B cell (primary cell): ENCODE measurements at regions of chr19 and their contacts with region 1.

Region 1: DNA sequence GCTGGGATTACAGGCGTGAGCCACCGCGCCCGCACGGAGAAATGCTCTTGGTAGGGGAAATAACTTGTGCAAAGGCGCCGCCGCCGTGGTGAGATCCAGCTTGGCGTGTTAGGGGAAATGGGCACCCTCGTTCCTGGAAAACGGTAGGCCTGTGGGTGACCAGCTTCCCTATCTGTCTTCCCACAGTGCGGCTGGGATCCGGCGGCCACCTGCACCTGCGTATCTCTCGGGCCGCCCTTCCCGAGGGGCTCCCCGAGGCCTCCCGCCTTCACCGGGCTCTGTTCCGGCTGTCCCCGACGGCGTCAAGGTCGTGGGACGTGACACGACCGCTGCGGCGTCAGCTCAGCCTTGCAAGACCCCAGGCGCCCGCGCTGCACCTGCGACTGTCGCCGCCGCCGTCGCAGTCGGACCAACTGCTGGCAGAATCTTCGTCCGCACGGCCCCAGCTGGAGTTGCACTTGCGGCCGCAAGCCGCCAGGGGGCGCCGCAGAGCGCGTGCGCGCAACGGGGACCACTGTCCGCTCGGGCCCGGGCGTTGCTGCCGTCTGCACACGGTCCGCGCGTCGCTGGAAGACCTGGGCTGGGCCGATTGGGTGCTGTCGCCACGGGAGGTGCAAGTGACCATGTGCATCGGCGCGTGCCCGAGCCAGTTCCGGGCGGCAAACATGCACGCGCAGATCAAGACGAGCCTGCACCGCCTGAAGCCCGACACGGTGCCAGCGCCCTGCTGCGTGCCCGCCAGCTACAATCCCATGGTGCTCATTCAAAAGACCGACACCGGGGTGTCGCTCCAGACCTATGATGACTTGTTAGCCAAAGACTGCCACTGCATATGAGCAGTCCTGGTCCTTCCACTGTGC is 2.4 kb downstream of the GDF15 start:
- DNase-seq: peak; percentile 93
- ATAC-seq: peak; percentile 85
- H3K4me3 ChIP-seq: peak overlapping the region in 4 of 5 experiments; percentile 26 to 51 (median 40)
- H3K4me3 Mint-ChIP-seq: peak overlapping the region; percentile 82
- H3K27ac ChIP-seq: no peak overlapping the region
- H3K27ac Mint-ChIP-seq: peak overlapping the region; percentile 70
- H3K4me1 ChIP-seq: peaks cover 34 to 36% of the 10 kb centered on the region in 2 donors
- H3K4me1 Mint-ChIP-seq: peaks cover 34% of the 10 kb centered on the region
- H3K27me3 ChIP-seq: peaks cover 0 to 38% (median 17%) of the 10 kb centered on the region in 4 experiments
- H3K27me3 Mint-ChIP-seq: peaks cover 5% of the 10 kb centered on the region
- CTCF ChIP-seq: peak; percentile 99

Region 2: DNA sequence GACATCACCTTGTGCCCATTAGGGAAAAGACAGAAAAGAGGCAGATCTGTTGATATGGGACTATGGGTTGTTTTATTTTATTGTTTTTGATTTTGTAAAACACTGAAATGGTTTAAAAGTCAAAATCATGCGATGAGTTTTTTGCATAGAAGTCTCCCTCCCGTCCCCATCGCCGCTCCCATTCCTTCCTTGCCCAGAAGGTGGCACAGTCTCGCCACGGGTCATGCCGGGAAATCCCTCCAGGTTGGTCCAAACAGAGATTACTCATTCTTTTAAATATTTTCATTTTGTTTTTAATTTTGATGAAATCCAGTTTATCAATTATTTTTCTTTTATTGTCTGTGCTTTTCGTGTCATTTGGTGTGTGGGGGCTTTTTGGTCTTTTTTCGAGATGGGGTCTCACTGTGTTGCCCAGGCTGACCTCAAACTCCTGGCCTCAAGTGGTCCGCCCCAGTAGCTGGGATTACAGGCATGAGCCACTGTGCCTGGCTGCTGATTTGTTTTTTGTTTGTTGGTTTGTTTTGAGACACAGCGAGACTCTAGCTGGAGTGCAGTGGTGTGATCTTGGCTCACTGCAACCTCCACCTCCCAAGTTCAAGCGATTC is 38.7 kb before region 1 on chr19:
- CTCF ChIA-PET with region 1: interaction called, 18 read pairs
- POLR2A ChIA-PET with region 1: no interaction called
- intact Hi-C with region 1: no loop called
- DNase-seq: peak; percentile 40
- ATAC-seq: peak; percentile 61
- H3K4me3 ChIP-seq: no peak overlapping the region
- H3K4me3 Mint-ChIP-seq: no peak overlapping the region
- H3K27ac ChIP-seq: no peak overlapping the region
- H3K27ac Mint-ChIP-seq: no peak overlapping the region
- H3K4me1 ChIP-seq: no peaks in the 10 kb centered on the region
- H3K4me1 Mint-ChIP-seq: no peaks in the 10 kb centered on the region
- H3K27me3 ChIP-seq: no peaks in the 10 kb centered on the region
- H3K27me3 Mint-ChIP-seq: no peaks in the 10 kb centered on the region
- CTCF ChIP-seq: peak; percentile 51

Region 3: DNA sequence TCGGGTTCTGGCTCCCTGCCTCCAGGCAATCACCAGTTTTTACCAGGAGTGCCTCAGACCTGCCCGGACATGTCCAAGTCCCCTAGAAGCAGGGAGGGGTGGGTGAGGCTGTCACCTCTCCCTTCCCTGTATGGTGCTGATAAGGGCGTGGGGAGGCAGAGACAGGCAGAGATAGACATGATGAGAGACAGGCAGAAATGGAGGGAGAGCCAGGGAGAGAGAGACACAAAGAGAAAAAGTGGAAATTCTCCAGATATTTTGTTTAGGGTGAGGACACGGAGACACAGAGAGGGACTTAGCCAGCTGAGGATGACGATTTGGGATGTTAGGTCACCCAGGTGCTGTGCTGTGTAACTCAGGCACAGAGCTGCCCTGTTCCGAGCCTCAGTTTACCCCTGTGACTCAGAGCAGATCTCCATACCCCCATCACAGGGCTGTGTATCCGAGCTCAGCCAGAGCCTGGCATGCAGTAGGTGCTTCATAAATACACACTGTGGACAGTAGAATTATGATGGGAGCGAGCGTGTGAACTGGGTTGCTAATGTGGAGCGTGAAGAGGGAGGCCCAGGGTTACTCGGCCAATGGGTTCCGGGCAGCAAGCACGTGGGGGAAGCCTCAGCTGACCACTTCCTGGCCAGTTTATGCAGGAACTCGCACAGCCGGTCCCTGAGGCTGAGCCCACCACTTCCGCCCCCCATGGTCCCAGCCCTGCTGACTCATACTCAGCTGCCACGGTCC is 14.3 kb before region 1 on chr19:
- CTCF ChIA-PET with region 1: interaction called, 11 read pairs
- POLR2A ChIA-PET with region 1: interaction called, 3 read pairs
- intact Hi-C with region 1: no loop called
- DNase-seq: peak; percentile 42
- ATAC-seq: peak; percentile 80
- H3K4me3 ChIP-seq: no peak overlapping the region
- H3K4me3 Mint-ChIP-seq: peak overlapping the region; percentile 51
- H3K27ac ChIP-seq: no peak overlapping the region
- H3K27ac Mint-ChIP-seq: peak overlapping the region; percentile 23
- H3K4me1 ChIP-seq: peaks cover 13 to 17% of the 10 kb centered on the region in 2 donors
- H3K4me1 Mint-ChIP-seq: peaks cover 14% of the 10 kb centered on the region
- H3K27me3 ChIP-seq: peaks cover 0 to 5% (median 0%) of the 10 kb centered on the region in 4 experiments
- H3K27me3 Mint-ChIP-seq: peaks cover 10% of the 10 kb centered on the region
- CTCF ChIP-seq: no peak

Region 4: DNA sequence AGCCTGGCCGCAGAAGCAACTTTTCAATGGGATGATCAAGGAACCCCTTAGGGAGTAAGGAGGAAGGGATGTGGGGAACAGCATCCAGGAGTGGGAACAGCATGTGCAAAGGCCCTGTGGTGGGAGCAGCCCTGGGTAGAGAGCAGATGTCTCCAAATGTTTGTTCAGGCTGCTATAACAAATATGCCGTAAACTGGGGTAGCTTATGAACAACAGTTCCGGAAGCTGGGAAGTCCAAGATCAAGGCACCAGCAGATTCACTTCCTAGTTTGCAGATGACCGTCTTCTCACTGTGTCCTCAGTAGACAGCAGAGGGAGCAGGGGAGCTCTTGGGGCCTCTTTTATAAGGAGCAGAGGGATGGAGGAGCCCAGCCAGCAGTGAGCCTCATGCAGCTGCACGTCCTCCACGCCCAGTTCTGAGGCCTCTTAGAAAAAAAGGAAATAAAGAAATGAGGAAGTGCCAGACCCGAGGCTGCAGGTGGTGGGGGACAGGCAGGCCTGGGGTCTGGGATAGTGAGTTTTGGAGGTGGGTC is 13.3 kb after region 1 on chr19:
- CTCF ChIA-PET with region 1: interaction called, 112 read pairs
- POLR2A ChIA-PET with region 1: interaction called, 9 read pairs
- intact Hi-C with region 1: loop called (anchors 1 kb)
- DNase-seq: peak; percentile 63
- ATAC-seq: peak; percentile 73
- H3K4me3 ChIP-seq: no peak overlapping the region
- H3K4me3 Mint-ChIP-seq: peak overlapping the region; percentile 46
- H3K27ac ChIP-seq: peak overlapping the region; percentile 60 to 65
- H3K27ac Mint-ChIP-seq: peak overlapping the region; percentile 86
- H3K4me1 ChIP-seq: peaks cover 28 to 41% of the 10 kb centered on the region in 2 donors
- H3K4me1 Mint-ChIP-seq: peaks cover 40% of the 10 kb centered on the region
- H3K27me3 ChIP-seq: peaks cover 0 to 2% (median 0%) of the 10 kb centered on the region in 4 experiments
- H3K27me3 Mint-ChIP-seq: no peaks in the 10 kb centered on the region
- CTCF ChIP-seq: peak; percentile 19

Region 5: GRCh38 chr19:18408053-18408476 is 19.7 kb after region 1 on chr19:
- CTCF ChIA-PET with region 1: interaction called, 196 read pairs
- POLR2A ChIA-PET with region 1: interaction called, 8 read pairs
- intact Hi-C with region 1: loop called (anchors 1 kb)
- DNase-seq: peak; percentile 90
- ATAC-seq: peak; percentile 90
- H3K4me3 ChIP-seq: no peak overlapping the region
- H3K4me3 Mint-ChIP-seq: peak overlapping the region; percentile 44
- H3K27ac ChIP-seq: peak overlapping the region in 1 of 2 donors; percentile 15
- H3K27ac Mint-ChIP-seq: peak overlapping the region; percentile 89
- H3K4me1 ChIP-seq: peaks cover 18 to 19% of the 10 kb centered on the region in 2 donors
- H3K4me1 Mint-ChIP-seq: peaks cover 23% of the 10 kb centered on the region
- H3K27me3 ChIP-seq: peaks cover 0 to 20% (median 7%) of the 10 kb centered on the region in 4 experiments
- H3K27me3 Mint-ChIP-seq: peaks cover 18% of the 10 kb centered on the region
- CTCF ChIP-seq: peak; percentile 31

Region 6: DNA sequence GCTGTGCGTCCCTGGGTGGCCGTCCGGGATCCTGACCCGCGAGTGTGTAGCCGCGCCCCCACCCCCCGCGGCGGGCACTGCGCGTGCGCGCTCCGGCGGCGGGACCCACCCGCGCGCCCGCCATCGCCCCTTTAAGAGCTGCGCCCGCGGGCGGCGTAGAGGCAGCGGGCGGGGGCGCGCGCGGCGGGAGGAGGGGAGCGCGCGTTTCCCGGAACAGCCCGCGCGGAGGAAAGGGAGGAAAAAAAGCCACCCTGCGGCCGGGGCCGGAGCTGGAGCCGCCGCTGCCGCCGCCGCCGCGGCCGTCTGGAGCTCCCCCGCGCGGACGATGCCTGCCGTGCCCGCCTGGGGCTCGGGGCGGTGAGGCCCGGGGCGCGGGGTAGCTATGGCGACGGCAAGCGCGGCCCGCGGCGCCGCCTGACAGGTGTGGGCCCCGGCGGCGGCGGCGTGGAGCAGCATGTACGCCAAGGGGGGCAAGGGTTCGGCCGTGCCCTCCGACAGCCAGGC is 30.9 kb after region 1 on chr19 and contains the start of gene SSBP4:
- CTCF ChIA-PET with region 1: interaction called, 196 read pairs
- POLR2A ChIA-PET with region 1: interaction called, 3 read pairs
- intact Hi-C with region 1: loop called (anchors 5 kb)
- DNase-seq: peak; percentile 88
- ATAC-seq: peak; percentile 64
- H3K4me3 ChIP-seq: peak within 1 kb of the TSS in 4 of 5 experiments; percentile 41 to 67 (median 52)
- H3K4me3 Mint-ChIP-seq: peak within 1 kb of the TSS; percentile 85
- H3K27ac ChIP-seq: no peak within 1 kb of the TSS
- H3K27ac Mint-ChIP-seq: peak within 1 kb of the TSS; percentile 71
- H3K4me1 ChIP-seq: peaks cover 70 to 77% of the 10 kb centered on the region in 2 donors
- H3K4me1 Mint-ChIP-seq: peaks cover 66% of the 10 kb centered on the region
- H3K27me3 ChIP-seq: peaks cover 0 to 50% (median 31%) of the 10 kb centered on the region in 4 experiments
- H3K27me3 Mint-ChIP-seq: peaks cover 31% of the 10 kb centered on the region
- CTCF ChIP-seq: peak; percentile 55
- total RNA-seq, gene SSBP4: 37.0 and 43.5 TPM in 2 replicates

Region 7: DNA sequence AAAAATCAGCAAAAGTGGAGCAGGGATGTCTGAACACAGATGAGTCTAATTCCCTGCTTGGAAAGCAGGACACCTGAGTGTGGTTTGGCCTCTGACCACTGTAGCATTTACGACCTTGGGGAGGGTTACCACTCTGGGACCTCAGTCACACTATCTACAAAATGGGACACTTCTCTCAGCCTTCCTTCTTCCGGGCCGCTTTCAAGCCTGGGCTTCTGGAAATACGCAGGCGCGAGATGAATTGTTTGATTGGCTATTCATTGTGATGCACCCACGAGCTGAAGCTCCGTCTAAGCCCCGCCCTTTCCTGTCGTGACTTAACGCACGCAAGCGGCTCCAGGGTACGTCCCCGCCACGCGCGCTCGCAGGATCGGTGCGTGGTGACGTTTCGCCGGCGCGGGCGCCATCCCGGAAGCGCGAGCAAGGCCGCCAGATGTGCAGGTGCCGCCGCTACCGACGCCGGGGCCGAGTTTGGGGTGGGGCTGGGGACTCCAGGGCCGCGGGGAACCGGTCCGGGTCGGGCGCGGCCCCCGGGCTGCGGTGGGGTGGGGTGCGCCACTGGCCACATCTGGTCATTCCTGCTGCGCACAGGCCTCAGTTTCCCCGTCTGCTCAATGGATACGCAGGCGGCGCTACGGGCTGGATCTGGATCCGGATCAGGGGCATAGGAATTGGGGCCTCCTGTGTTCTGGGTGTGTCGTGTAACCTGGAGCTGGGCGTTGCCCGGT is 169.3 kb after region 1 on chr19 and contains the start of gene KXD1:
- CTCF ChIA-PET with region 1: no interaction called
- POLR2A ChIA-PET with region 1: no interaction called
- intact Hi-C with region 1: no loop called
- DNase-seq: peak; percentile 99
- ATAC-seq: peak; percentile 99
- H3K4me3 ChIP-seq: peak within 1 kb of the TSS; percentile 73 to 98 (median 93)
- H3K4me3 Mint-ChIP-seq: peak within 1 kb of the TSS; percentile 90
- H3K27ac ChIP-seq: peak within 1 kb of the TSS; percentile 82 to 97
- H3K27ac Mint-ChIP-seq: peak within 1 kb of the TSS; percentile 90
- H3K4me1 ChIP-seq: peaks cover 15 to 25% of the 10 kb centered on the region in 2 donors
- H3K4me1 Mint-ChIP-seq: peaks cover 21% of the 10 kb centered on the region
- H3K27me3 ChIP-seq: no peaks in the 10 kb centered on the region
- H3K27me3 Mint-ChIP-seq: no peaks in the 10 kb centered on the region
- CTCF ChIP-seq: no peak
- total RNA-seq, gene KXD1: 88.5 and 90.0 TPM in 2 replicates